ENCODE measurements at regions of chr5 and their contacts with region 1.

Region 1: GRCh38 chr5:58460732-58461286 is 923 bp upstream of the PLK2 start:
- DNase-seq: peak; percentile 87
- H3K4me3 ChIP-seq: peak overlapping the region; percentile 90
- CTCF ChIP-seq: peak; percentile 77

Region 2: GRCh38 chr5:57499262-57500050 is 961.4 kb before region 1 on chr5:
- in situ Hi-C with region 1: loop called (anchors 25 kb)
- DNase-seq: peak; percentile 72
- H3K4me3 ChIP-seq: no peak overlapping the region
- CTCF ChIP-seq: peak; percentile 74

Region 3: GRCh38 chr5:57779383-57780223 is 681.2 kb before region 1 on chr5:
- in situ Hi-C with region 1: loop called (anchors 25 kb)
- DNase-seq: peak; percentile 88
- H3K4me3 ChIP-seq: no peak overlapping the region
- CTCF ChIP-seq: peak; percentile 58

Region 4: GRCh38 chr5:58378613-58379390 is 82.0 kb before region 1 on chr5:
- in situ Hi-C with region 1: no loop called
- DNase-seq: no peak
- H3K4me3 ChIP-seq: no peak overlapping the region
- CTCF ChIP-seq: no peak

Measured in astrocyte of the spinal cord (primary cell).